CD8-positive, alpha-beta T cell (primary cell): ENCODE measurements at regions of chr20 and their contacts with region 1.

Region 1: DNA sequence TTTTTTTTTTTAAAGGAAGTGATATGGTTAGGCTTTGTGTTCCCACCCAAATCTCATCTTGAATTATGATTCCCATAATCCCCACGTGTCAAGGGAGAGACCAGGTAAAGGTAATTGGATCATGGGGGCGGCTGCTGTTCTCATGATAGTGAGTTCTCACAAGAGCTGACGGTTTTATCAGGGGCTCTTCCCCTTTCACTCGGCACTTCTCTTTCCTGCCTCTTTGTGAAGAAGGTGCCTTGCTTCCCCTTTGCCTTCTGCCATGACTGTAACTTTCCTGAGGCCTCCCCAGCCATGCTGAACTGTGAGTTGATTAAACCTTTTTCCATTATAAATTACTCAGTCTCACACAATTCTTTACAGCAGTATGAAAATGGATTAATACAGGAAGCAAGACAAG is 64.3 kb downstream of the ZFP64 start:
- DNase-seq: no peak
- ATAC-seq: no peak
- H3K4me3 ChIP-seq: no peak overlapping the region
- H3K4me3 Mint-ChIP-seq: no peak overlapping the region
- H3K27ac ChIP-seq: no peak overlapping the region
- H3K27ac Mint-ChIP-seq: no peak overlapping the region
- H3K4me1 ChIP-seq: no peaks in the 10 kb centered on the region
- H3K4me1 Mint-ChIP-seq: peaks cover 3% of the 10 kb centered on the region
- H3K27me3 ChIP-seq: no peaks in the 10 kb centered on the region
- H3K27me3 Mint-ChIP-seq: no peaks in the 10 kb centered on the region
- CTCF ChIP-seq: no peak

Region 2: GRCh38 chr20:52110456-52110855 is 16.9 kb before region 1 on chr20:
- CTCF ChIA-PET with region 1: interaction called, 10 read pairs
- POLR2A ChIA-PET with region 1: no interaction called
- intact Hi-C with region 1: no loop called
- DNase-seq: no peak
- ATAC-seq: no peak
- H3K4me3 ChIP-seq: no peak overlapping the region
- H3K4me3 Mint-ChIP-seq: no peak overlapping the region
- H3K27ac ChIP-seq: no peak overlapping the region
- H3K27ac Mint-ChIP-seq: no peak overlapping the region
- H3K4me1 ChIP-seq: peaks cover 6% of the 10 kb centered on the region
- H3K4me1 Mint-ChIP-seq: peaks cover 7% of the 10 kb centered on the region
- H3K27me3 ChIP-seq: peaks cover 5 to 8% of the 10 kb centered on the region in 2 experiments
- H3K27me3 Mint-ChIP-seq: peaks cover 15% of the 10 kb centered on the region
- CTCF ChIP-seq: no peak

Region 3: DNA sequence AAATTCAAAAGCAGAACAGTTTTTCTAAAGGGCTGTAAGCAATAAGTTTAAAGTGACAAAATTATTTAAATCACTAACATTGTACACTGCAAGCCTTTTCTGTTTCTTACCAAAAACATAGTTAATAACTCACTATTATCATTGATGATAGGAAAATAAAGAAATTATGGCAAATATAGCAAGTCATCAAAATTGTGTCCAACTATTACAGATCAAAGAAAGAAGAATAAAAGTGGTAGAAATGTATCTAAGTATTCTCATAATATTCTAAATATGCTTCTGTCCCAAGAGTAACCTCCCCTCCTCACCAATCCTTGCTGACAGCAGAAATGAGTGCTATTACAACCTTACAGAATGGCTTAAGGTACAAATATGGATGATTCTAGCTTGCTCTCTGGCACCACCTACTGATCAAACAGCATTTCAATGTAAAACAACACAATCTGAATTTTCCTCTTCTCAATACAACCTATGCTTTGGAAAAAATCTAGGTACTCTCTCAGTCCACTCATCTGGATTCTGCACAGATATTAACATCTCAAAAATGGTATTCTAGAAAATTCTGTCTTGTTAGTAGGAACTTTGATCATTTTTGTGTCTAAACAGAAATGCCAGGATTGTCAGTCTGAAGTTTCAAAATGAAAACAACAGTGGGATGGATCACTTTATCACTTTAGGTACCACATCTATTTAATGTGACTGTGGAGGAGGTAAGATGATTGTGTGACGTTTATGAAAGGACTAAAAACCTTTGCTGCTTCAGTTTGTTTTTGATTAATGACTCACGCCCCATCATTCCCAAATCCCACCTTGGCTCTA is 23.3 kb after region 1 on chr20:
- CTCF ChIA-PET with region 1: interaction called, 17 read pairs
- POLR2A ChIA-PET with region 1: no interaction called
- intact Hi-C with region 1: loop called in 1 of 2 experiments (anchors 1 kb)
- DNase-seq: peak in 3 of 9 experiments; percentile 20 to 53 (median 44)
- ATAC-seq: no peak
- H3K4me3 ChIP-seq: no peak overlapping the region
- H3K4me3 Mint-ChIP-seq: no peak overlapping the region
- H3K27ac ChIP-seq: no peak overlapping the region
- H3K27ac Mint-ChIP-seq: no peak overlapping the region
- H3K4me1 ChIP-seq: no peaks in the 10 kb centered on the region
- H3K4me1 Mint-ChIP-seq: no peaks in the 10 kb centered on the region
- H3K27me3 ChIP-seq: no peaks in the 10 kb centered on the region
- H3K27me3 Mint-ChIP-seq: no peaks in the 10 kb centered on the region
- CTCF ChIP-seq: peak; percentile 96

Region 4: DNA sequence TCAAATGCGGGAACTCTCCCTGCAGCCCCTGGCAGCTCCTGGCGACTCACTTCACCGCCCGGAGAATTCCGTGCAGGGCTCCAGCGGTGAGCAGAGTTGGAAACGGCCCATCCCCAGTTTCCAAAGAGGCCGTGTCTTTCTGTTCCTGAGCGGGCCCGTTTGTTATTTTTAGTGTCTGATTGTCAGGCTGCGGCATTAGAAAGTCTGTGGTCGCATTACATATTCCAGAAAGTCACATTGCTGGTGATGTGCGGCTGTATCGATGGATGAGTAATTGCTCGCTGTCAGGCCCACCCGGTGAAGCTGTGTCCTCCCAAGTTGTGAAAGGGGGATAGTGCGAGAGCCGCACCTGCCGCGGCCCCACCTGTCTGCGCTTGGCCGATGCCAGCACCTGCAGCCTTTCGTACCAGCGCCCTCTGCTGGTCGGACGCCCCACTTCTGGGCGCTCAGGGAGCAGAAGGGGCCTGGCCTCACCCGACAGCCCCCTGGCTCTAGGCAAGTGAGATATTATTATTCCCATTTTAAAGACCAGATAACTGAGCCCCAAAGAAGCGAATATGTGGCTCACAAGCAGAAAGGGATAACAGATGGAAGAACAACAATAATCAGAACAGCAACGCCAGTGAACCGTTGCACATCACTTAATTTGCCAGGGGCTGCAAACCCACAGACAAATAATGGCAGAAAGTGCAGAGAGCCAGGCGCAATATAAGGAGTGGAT is 1089.7 kb after region 1 on chr20:
- CTCF ChIA-PET with region 1: no interaction called
- POLR2A ChIA-PET with region 1: no interaction called
- intact Hi-C with region 1: loop called in 1 of 2 experiments (anchors 5 kb)
- DNase-seq: peak; percentile 72 to 92 (median 80)
- ATAC-seq: peak; percentile 89
- H3K4me3 ChIP-seq: peak overlapping the region in 1 of 2 experiments; percentile 13
- H3K4me3 Mint-ChIP-seq: peak overlapping the region; percentile 60
- H3K27ac ChIP-seq: no peak overlapping the region
- H3K27ac Mint-ChIP-seq: no peak overlapping the region
- H3K4me1 ChIP-seq: peaks cover 22% of the 10 kb centered on the region
- H3K4me1 Mint-ChIP-seq: peaks cover 18% of the 10 kb centered on the region
- H3K27me3 ChIP-seq: no peaks in the 10 kb centered on the region
- H3K27me3 Mint-ChIP-seq: peaks cover 11% of the 10 kb centered on the region
- CTCF ChIP-seq: peak; percentile 97